Aorta (tissue), 5 donors: ENCODE measurements at regions of chr6 and their contacts with region 1.

Region 1: DNA sequence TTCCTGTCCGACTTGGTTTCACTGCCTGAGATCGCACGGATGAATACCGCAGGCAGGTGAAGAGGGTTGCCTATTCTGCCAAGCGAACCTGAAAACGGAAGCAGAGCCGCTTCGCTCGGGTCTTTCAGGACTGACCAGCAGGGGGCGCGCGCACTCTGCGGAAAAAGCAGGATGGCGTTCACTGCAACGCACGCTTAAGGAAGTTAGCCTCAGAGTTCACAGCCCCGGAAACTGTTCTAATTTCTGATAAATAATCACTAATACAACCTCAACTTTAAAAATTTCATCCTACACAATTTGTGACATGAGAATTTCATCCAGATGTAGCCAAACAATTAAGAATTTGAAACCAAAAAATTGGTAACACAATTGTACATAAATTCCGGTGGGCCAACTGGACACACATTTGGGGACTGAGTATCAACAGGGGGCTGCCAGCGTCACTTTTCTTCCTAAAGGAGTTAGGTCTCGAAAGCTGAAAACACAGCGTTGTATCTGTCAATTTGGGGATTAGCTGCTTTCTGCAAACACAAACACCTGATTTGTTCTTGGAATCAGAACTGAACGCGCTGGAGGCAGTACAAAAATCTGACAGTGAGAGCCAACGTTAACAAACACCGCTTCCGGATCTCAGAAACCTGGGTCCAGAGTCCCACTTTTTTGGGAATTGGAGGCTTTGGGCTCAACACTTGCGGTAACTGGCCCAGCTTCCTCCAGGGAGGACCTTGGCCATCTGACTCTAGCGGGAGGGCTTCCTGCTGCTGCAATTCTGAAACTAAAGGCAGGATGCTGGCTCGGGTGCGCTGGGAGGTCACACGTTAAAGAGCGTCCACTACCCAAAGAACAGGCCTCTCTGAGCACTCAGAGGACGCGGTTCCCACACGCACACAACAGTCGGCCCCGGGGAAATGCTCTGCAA is 8.8 kb downstream of the PXDC1 start:
- DNase-seq: peak; percentile 89 to 97
- ATAC-seq: peak; percentile 86
- H3K4me3 ChIP-seq: peak overlapping the region in 1 of 2 donors; percentile 23
- H3K27ac ChIP-seq: peak overlapping the region in 1 of 2 donors; percentile 97
- H3K4me1 ChIP-seq: no peaks in the 10 kb centered on the region
- H3K27me3 ChIP-seq: no peaks in the 10 kb centered on the region

Region 2: DNA sequence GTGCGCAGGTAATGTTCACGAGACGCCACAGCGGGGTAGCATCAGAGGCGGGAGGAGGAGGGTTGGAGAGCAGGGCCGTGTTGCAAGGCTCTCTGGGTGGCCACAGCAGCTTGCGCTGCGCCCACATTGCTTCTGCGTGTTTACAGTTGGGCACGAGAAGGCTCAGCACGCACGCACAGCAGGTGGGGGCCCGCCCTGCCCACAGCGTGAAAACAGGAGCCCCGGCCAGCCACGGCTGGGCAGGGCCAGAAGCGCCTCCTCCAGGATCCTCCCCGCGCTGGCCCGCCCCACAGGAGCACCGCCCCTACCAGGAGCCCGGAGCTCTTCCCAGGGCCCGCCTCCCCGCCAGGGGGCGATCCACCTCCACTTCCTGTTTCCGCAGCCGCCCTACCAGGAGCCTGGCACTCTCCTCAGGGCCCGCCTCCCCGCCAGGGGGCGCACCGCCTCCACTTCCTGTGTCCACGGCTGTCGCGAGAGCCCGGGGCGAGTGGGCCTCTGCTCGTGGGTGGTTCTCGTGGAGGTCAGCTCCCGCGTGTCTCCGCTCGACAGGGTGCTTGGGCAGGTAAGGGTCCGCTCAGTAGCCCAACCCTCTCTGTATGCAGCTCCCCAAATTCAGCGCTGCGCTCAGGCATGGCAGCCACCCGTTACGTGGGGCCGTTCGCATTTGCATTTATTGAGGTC is 106.4 kb after region 1 on chr6 and contains the start of gene FAM50B:
- intact Hi-C with region 1: loop called (anchors 2 to 5 kb)
- DNase-seq: peak; percentile 95 to 98
- ATAC-seq: peak; percentile 98
- H3K4me3 ChIP-seq: peak within 1 kb of the TSS in 1 of 2 donors; percentile 9
- H3K27ac ChIP-seq: peak within 1 kb of the TSS in 1 of 2 donors; percentile 55
- H3K4me1 ChIP-seq: peaks cover 0 to 4% of the 10 kb centered on the region in 2 donors
- H3K27me3 ChIP-seq: no peaks in the 10 kb centered on the region
- total RNA-seq, gene FAM50B: 7.8 to 9.1 TPM

Region 3: DNA sequence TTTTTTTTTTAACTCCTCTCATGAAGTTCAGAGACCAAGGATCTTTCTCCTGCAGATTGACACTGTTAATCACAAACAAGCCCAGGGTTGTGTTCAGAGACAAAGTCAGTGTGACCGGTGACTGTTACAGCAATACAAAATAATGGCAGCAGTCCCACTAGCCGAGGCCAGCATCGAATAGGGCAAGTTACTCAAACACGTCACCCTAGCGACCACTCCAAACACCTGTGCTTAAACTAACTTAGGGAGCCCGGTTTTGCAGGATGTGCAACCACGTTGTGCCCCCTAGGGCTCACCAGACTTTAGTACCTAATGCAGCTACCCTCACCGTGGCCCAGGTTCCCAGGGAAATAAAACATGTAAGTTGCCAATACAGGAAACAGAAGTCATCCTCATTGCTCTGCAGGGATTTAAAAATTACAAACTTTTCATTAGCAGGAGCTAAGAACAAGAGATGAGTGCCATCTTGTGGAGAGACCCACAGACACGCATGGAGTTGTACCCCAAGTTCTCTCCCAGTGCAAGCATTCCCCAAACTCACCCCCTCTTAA is 144.5 kb after region 1 on chr6:
- intact Hi-C with region 1: loop called (anchors 2 to 5 kb)
- DNase-seq: no peak
- ATAC-seq: no peak
- H3K4me3 ChIP-seq: no peak overlapping the region
- H3K27ac ChIP-seq: no peak overlapping the region
- H3K4me1 ChIP-seq: no peaks in the 10 kb centered on the region
- H3K27me3 ChIP-seq: no peaks in the 10 kb centered on the region